MCF 10A (cell line): ENCODE measurements at regions of chr2 and their contacts with region 1.

Region 1: DNA sequence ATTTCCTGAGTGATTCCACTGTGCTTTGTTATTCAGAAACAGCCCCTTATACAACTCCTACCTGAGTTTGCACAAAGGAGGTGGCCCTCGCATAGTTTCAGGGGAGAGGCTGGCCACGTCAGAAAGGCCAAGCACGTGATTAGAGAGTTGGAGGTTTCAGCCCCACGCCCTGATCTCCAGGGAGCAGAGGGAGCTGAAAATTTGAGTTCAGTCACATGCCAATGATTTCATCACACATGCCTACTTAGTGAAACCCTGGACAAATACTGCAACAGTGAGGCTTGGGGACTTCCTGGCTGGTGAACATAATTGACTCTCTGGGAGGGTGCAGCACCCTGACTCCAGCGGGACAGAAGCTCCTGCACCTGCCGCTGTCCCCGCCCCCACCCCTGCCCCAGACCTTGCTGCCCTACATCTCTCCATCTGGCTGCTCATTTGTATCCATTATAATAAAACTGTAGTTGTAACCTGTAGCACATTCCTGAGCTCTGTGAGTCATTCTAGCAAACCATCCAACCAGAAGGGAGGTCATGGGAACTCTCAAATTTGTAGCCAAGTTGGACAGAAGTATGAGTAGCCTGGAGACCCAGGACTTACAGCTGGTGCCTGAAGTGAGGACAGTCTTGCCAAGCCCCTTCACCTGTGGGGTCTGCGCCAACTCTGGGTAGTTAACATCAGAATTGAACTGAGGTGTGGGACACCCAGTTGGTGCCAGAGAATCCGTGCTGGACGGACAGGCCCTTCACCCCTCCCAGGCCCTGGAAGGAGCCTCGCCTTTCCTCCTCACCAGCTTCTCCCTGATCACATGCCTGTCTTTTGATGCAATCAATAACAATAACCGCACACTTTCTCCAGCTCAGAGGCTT is 224.3 kb downstream of the ANAPC1 start:
- DNase-seq: peak; percentile 97
- H3K4me3 Mint-ChIP-seq: peak overlapping the region; percentile 45
- H3K27ac Mint-ChIP-seq: peak overlapping the region; percentile 99
- H3K4me1 Mint-ChIP-seq: peaks cover 50% of the 10 kb centered on the region
- H3K27me3 Mint-ChIP-seq: no peaks in the 10 kb centered on the region
- CTCF ChIP-seq: no peak

Region 2: DNA sequence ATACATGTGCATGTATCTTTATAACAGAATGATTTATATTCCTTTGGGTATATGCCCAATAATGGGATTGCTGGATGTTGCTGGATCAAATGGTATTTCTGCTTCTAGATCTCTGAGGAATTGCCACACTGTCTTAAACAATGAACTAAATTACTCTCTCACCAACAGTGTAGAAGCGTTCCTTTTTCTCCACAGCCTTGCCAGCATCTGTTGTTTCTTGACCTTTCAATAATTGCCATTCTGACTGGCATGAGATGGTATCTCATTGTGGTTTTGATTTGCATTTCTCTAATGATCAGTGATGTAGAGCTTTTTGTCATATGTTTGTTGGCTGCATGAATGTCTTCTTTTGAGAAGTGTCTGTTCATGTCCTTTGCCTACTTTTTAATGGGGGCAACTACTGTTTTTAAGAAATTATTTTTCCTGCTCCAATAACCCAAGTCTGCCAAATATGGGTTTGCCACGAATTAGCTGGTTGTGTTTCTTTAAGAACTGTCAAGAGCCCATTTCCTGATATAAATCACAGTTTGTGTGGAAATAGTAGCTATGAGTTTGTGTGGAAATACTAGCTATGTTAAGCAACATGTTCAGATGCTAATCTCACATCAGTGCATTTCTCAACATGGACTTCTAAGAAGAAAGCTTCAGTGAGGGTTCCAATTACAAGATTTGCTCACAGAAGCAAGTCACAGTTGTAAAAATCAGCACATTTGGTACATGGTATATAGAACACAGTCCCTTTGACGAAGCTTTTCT is 35.1 kb before region 1 on chr2:
- CTCF ChIA-PET with region 1: no interaction called
- POLR2A ChIA-PET with region 1: interaction called, 34 read pairs
- intact Hi-C with region 1: loop called (anchors 5 kb)
- DNase-seq: peak; percentile 90
- H3K4me3 Mint-ChIP-seq: peak overlapping the region; percentile 38
- H3K27ac Mint-ChIP-seq: peak overlapping the region; percentile 70
- H3K4me1 Mint-ChIP-seq: peaks cover 44% of the 10 kb centered on the region
- H3K27me3 Mint-ChIP-seq: no peaks in the 10 kb centered on the region
- CTCF ChIP-seq: no peak

Region 3: GRCh38 chr2:111640481-111640880 is 19.2 kb before region 1 on chr2:
- CTCF ChIA-PET with region 1: interaction called, 6 read pairs
- POLR2A ChIA-PET with region 1: interaction called, 44 read pairs
- intact Hi-C with region 1: no loop called
- DNase-seq: peak; percentile 92
- H3K4me3 Mint-ChIP-seq: no peak overlapping the region
- H3K27ac Mint-ChIP-seq: peak overlapping the region; percentile 5
- H3K4me1 Mint-ChIP-seq: peaks cover 12% of the 10 kb centered on the region
- H3K27me3 Mint-ChIP-seq: no peaks in the 10 kb centered on the region
- CTCF ChIP-seq: no peak

Region 4: GRCh38 chr2:111647359-111647758 is 12.3 kb before region 1 on chr2:
- CTCF ChIA-PET with region 1: interaction called, 5 read pairs
- POLR2A ChIA-PET with region 1: interaction called, 26 read pairs
- intact Hi-C with region 1: no loop called
- DNase-seq: no peak
- H3K4me3 Mint-ChIP-seq: no peak overlapping the region
- H3K27ac Mint-ChIP-seq: no peak overlapping the region
- H3K4me1 Mint-ChIP-seq: peaks cover 5% of the 10 kb centered on the region
- H3K27me3 Mint-ChIP-seq: no peaks in the 10 kb centered on the region
- CTCF ChIP-seq: no peak

Region 5: DNA sequence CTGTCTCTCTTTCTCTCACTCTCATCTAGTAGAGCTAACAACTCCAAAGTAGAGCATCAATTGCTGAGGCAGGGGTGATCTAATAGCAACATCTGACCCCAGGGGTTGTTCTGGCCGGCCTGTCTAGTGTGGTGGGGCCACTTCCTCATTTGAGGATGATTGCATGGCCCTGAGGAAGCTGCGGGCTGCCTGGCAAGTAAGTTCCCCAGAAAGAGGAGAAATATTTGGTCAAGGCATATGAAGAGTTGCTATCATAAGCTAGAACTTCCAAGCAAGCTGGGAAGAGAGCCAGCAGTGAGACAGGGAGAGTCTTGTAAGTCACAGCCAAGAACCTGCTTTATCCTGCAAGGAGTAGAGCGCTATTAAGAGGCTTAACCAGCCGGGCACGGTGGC is 344.6 kb after region 1 on chr2:
- CTCF ChIA-PET with region 1: no interaction called
- POLR2A ChIA-PET with region 1: no interaction called
- intact Hi-C with region 1: no loop called
- DNase-seq: no peak
- H3K4me3 Mint-ChIP-seq: no peak overlapping the region
- H3K27ac Mint-ChIP-seq: no peak overlapping the region
- H3K4me1 Mint-ChIP-seq: peaks cover 6% of the 10 kb centered on the region
- H3K27me3 Mint-ChIP-seq: peaks cover 33% of the 10 kb centered on the region
- CTCF ChIP-seq: no peak